ENCODE measurements at regions of chr18 and their contacts with region 1.

Region 1: DNA sequence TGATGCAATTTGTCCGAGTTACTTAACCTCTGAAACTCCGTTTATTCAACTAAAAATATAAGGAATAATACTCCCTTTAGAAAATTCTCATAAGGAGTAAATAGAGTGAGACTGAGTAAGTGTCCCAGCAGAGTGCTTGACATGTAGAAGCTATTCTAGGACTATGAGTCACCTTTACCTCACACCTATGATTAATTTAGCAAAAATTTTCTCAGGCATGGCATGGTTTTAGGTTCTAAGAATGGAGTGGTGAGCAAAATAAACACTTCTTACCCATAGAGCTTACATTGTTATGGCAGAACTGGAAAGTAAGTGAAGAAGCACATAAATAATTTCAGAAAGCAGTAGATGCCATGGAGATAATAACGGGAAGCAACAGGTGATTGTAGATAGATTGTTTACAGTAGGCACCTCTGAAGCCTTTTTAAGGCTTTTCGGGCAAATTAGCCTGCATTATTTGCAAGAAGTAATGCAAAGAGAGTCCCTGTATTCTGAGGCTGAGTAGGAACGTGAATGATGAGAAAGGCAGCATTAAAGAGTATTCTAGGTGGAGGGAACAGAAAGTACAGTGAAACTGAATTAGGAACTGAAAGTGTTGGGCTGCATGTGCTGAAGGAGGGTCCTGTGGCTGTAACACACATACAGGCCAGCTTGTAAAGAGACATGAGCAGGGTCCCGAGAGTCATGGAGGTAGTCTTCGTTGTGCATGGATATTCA is 209.2 kb downstream of the ZNF407 start:
- DNase-seq: peak; percentile 97
- ATAC-seq: peak; percentile 99
- H3K4me3 ChIP-seq: peak overlapping the region; percentile 36
- H3K27ac ChIP-seq: peak overlapping the region; percentile 92
- H3K4me1 ChIP-seq: peaks cover 26% of the 10 kb centered on the region
- H3K27me3 ChIP-seq: no peaks in the 10 kb centered on the region
- CTCF ChIP-seq: no peak

Region 2: DNA sequence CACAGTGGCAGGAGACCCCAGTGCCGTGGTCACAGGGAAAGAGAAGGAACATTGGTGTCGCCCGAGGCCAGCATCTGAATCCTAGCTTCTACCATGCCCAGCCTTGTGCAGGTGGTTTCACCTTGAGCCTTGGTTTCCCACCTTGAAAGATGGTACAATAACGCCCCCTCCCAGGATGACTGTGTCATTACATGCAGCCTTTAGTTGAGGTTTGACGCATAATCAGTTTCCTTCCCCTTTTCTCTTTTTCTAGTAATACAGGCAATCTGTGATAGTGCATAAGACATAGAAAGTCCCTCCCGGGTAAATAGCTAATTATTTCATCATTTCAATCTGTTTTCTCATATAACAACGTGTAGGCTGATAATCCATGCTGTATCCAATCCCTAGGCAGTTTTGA is 239.0 kb before region 1 on chr18:
- CTCF ChIA-PET with region 1: no interaction called
- POLR2A ChIA-PET with region 1: no interaction called
- intact Hi-C with region 1: no loop called
- DNase-seq: no peak
- ATAC-seq: no peak
- H3K4me3 ChIP-seq: no peak overlapping the region
- H3K27ac ChIP-seq: no peak overlapping the region
- H3K4me1 ChIP-seq: no peaks in the 10 kb centered on the region
- H3K27me3 ChIP-seq: peaks cover 51% of the 10 kb centered on the region
- CTCF ChIP-seq: no peak

Region 3: DNA sequence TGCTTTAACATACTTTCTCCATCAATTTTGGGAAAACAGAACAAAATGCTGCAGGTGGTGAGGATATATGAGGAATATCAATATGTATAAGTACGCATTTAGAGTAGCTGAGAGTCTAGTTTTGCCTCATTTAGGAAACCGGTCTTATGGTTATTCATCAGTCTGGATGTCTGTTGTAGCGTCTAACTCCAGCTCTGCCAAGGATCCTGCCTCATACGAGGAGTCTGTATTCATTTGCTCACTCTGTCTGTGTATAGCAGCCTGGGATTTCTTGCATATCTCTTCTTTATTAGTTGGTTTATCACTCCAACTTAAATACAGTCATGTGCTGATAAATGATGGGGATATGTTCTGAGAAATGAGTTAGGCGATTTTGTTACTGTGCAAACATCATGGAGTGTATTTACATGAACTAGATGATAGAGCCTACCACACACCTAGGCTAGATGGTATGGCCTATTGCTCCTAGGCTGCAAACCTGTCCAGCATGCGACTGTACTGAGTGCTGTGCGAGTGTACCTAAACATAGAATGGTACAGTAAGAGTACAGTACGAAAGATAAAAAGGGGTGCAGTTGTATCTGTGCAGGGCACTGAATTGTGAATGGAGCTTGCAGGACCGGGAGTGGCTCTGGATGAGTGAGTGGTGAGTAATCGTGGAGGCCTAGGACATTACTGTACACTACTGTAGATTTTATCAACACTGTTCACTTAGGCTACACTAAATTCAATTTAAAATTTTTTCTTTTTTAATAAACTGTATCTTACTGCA is 61.0 kb before region 1 on chr18:
- CTCF ChIA-PET with region 1: no interaction called
- POLR2A ChIA-PET with region 1: no interaction called
- intact Hi-C with region 1: loop called (anchors 1 kb)
- DNase-seq: peak; percentile 89
- ATAC-seq: peak; percentile 99
- H3K4me3 ChIP-seq: peak overlapping the region; percentile 44
- H3K27ac ChIP-seq: peak overlapping the region; percentile 83
- H3K4me1 ChIP-seq: peaks cover 24% of the 10 kb centered on the region
- H3K27me3 ChIP-seq: no peaks in the 10 kb centered on the region
- CTCF ChIP-seq: no peak

Region 4: GRCh38 chr18:74942319-74942910 is 135.6 kb after region 1 on chr18:
- CTCF ChIA-PET with region 1: no interaction called
- POLR2A ChIA-PET with region 1: no interaction called
- intact Hi-C with region 1: loop called (anchors 5 kb)
- DNase-seq: peak; percentile 50
- ATAC-seq: peak; percentile 48
- H3K4me3 ChIP-seq: no peak overlapping the region
- H3K27ac ChIP-seq: peak overlapping the region; percentile 33
- H3K4me1 ChIP-seq: peaks cover 44% of the 10 kb centered on the region
- H3K27me3 ChIP-seq: no peaks in the 10 kb centered on the region
- CTCF ChIP-seq: no peak

Region 5: GRCh38 chr18:74963820-74964446 is 157.1 kb after region 1 on chr18:
- CTCF ChIA-PET with region 1: no interaction called
- POLR2A ChIA-PET with region 1: no interaction called
- intact Hi-C with region 1: no loop called
- DNase-seq: peak; percentile 63
- ATAC-seq: peak; percentile 97
- H3K4me3 ChIP-seq: no peak overlapping the region
- H3K27ac ChIP-seq: no peak overlapping the region
- H3K4me1 ChIP-seq: no peaks in the 10 kb centered on the region
- H3K27me3 ChIP-seq: no peaks in the 10 kb centered on the region
- CTCF ChIP-seq: peak; percentile 77